Calu3 (cell line): ENCODE measurements at regions of chr5 and their contacts with region 1.

Region 1: GRCh38 chr5:150350524-150351344 is 6.8 kb upstream of the TCOF1 start:
- DNase-seq: peak; percentile 84
- H3K4me3 Mint-ChIP-seq: no peak overlapping the region
- H3K27ac Mint-ChIP-seq: no peak overlapping the region
- H3K4me1 Mint-ChIP-seq: peaks cover 10% of the 10 kb centered on the region
- H3K27me3 Mint-ChIP-seq: peaks cover 21% of the 10 kb centered on the region
- CTCF ChIP-seq: peak; percentile 93

Region 2: GRCh38 chr5:150161242-150162141 is 189.2 kb before region 1 on chr5:
- CTCF ChIA-PET with region 1: no interaction called
- intact Hi-C with region 1: loop called (anchors 1 kb)
- DNase-seq: peak; percentile 97
- H3K4me3 Mint-ChIP-seq: no peak overlapping the region
- H3K27ac Mint-ChIP-seq: no peak overlapping the region
- H3K4me1 Mint-ChIP-seq: peaks cover 26% of the 10 kb centered on the region
- H3K27me3 Mint-ChIP-seq: peaks cover 17% of the 10 kb centered on the region
- CTCF ChIP-seq: peak; percentile 96

Region 3: GRCh38 chr5:150272526-150272925 is 78.2 kb before region 1 on chr5:
- CTCF ChIA-PET with region 1: interaction called, 8 read pairs
- intact Hi-C with region 1: loop called (anchors 1 kb)
- DNase-seq: peak; percentile 50
- H3K4me3 Mint-ChIP-seq: no peak overlapping the region
- H3K27ac Mint-ChIP-seq: no peak overlapping the region
- H3K4me1 Mint-ChIP-seq: no peaks in the 10 kb centered on the region
- H3K27me3 Mint-ChIP-seq: peaks cover 53% of the 10 kb centered on the region
- CTCF ChIP-seq: no peak

Region 4: GRCh38 chr5:150286890-150287219 is 63.9 kb before region 1 on chr5:
- CTCF ChIA-PET with region 1: no interaction called
- intact Hi-C with region 1: loop called (anchors 1 kb)
- DNase-seq: peak; percentile 79
- H3K4me3 Mint-ChIP-seq: no peak overlapping the region
- H3K27ac Mint-ChIP-seq: no peak overlapping the region
- H3K4me1 Mint-ChIP-seq: no peaks in the 10 kb centered on the region
- H3K27me3 Mint-ChIP-seq: peaks cover 88% of the 10 kb centered on the region
- CTCF ChIP-seq: peak; percentile 94